ENCODE measurements at regions of chr12 and their contacts with region 1.

Region 1: DNA sequence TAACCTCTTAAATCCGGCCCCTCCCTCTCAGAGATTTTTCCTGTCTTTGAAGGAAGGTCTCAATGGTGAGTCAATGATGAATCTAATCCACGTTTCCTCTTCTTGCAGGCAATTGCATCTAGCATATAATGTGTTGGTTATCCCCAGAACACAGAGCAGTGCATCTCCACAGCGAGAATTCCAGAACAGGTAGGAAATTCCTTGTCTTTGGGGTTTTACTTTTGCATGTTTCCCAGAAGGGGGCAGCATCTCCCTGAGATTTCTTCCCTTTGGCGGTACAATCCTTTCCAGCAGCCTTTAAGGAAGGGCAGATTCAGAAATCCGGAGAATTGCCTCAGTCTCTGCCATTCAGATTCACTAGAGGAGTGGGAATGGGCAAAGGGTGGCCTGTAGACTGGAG is 128.0 kb downstream of the KCNA5 start:
- DNase-seq: no peak
- ATAC-seq: peak; percentile 43
- H3K4me3 ChIP-seq: no peak overlapping the region
- H3K27ac ChIP-seq: peak overlapping the region in 1 of 2 donors; percentile 25
- H3K4me1 ChIP-seq: peaks cover 0 to 6% of the 10 kb centered on the region in 2 donors
- H3K27me3 ChIP-seq: no peaks in the 10 kb centered on the region

Region 2: GRCh38 chr12:5022465-5023061 is 149.1 kb before region 1 on chr12:
- intact Hi-C with region 1: loop called (anchors 10 kb)
- DNase-seq: peak in 1 of 2 donors; percentile 81
- ATAC-seq: peak; percentile 63
- H3K4me3 ChIP-seq: no peak overlapping the region
- H3K27ac ChIP-seq: no peak overlapping the region
- H3K4me1 ChIP-seq: peaks cover 0 to 2% of the 10 kb centered on the region in 2 donors
- H3K27me3 ChIP-seq: no peaks in the 10 kb centered on the region

Region 3: GRCh38 chr12:5096241-5096935 is 75.3 kb before region 1 on chr12:
- intact Hi-C with region 1: loop called in 1 of 2 experiments (anchors 5 kb)
- DNase-seq: no peak
- ATAC-seq: no peak
- H3K4me3 ChIP-seq: no peak overlapping the region
- H3K27ac ChIP-seq: no peak overlapping the region
- H3K4me1 ChIP-seq: no peaks in the 10 kb centered on the region
- H3K27me3 ChIP-seq: no peaks in the 10 kb centered on the region

Region 4: GRCh38 chr12:5428332-5429221 is 256.9 kb after region 1 on chr12:
- intact Hi-C with region 1: loop called in 1 of 2 experiments (anchors 5 kb)
- DNase-seq: no peak
- ATAC-seq: no peak
- H3K4me3 ChIP-seq: no peak overlapping the region
- H3K27ac ChIP-seq: no peak overlapping the region
- H3K4me1 ChIP-seq: no peaks in the 10 kb centered on the region
- H3K27me3 ChIP-seq: no peaks in the 10 kb centered on the region

Region 5: DNA sequence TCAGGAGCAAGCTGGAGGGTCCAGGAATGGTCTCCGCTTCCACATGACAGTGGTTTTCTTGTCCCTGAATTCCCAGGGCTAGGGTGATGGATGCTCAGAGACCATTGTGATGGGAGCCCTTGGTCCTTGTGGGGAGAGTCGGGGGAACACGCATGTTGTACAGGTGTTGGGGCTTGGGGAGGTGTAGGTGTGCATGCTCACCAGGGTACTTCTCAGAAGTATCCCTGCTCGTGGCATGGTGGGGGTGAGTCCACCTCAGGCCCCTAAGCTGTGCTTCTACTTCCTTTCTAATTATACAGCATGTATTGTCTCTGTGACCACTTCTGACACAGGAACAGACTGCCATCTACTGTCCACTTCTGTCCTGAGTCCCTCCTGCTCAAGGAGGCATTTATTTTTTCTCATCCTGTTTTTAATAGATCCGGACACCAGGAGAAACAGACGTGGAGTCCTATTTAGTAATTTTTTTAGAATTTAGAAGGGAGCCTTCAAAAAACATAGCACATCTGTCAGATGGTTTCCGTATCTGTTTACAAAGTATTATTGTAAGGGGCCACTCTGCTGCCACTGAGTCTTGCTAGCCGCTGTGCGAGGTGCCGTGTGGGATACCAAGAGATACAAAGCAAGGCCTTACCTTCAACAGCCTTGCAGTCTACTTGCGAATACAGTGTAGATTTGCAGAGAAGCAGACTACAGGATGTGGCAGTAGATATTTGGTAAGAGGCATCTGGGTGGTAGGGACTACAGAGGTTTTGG is 270.7 kb after region 1 on chr12:
- intact Hi-C with region 1: loop called in 1 of 2 experiments (anchors 5 kb)
- DNase-seq: no peak
- ATAC-seq: peak; percentile 71
- H3K4me3 ChIP-seq: no peak overlapping the region
- H3K27ac ChIP-seq: no peak overlapping the region
- H3K4me1 ChIP-seq: peaks cover under 1 to 8% of the 10 kb centered on the region in 2 donors
- H3K27me3 ChIP-seq: no peaks in the 10 kb centered on the region

Region 6: DNA sequence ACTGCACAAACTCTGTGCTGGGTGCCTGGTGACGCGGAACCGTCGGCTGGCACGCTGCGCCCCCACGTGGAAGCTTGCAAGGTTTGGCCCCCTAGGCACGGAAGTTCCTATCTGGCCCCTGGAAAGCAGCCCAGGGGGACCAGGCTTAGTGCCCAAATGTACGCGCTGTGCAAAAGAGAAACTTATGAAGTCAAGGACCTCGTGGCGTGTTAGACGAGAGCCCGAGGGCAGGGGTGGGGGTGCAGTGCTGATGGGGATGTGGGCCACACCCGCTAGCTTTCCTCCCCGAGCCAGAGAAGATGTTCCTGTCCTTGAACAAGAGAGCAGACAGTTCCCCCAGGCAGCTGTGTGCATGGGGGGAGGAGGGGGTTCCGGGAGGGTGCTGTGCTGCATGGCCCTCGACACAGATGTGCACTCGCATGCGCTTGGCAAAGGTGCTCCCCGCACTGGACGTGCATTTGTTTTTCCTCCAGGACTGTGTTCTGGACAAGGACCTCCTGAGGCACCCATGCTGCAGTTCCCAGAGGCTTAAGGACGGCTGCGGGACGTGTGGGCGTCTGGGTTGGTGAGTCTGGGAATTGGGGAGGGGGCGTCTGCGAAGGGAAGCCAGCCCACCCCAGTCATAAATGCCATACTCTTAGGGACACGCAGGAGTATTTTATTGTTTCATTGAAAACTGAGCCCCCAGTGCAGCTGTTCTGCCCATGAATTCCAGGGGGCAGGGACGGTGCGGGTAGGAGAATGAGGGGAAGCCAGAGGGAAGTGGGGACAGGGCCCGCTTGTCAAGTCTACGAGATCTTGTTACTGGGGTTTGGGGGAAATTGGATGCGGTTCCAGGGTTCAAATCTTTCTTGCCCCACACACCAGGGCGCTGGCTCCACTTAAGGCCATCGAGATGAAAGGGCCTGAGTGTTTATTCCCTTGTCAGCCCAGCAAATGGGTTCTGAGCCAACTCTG is 340.2 kb after region 1 on chr12:
- intact Hi-C with region 1: loop called in 1 of 2 experiments (anchors 10 kb)
- DNase-seq: peak; percentile 74 to 91
- ATAC-seq: peak; percentile 69
- H3K4me3 ChIP-seq: no peak overlapping the region
- H3K27ac ChIP-seq: no peak overlapping the region
- H3K4me1 ChIP-seq: no peaks in the 10 kb centered on the region
- H3K27me3 ChIP-seq: no peaks in the 10 kb centered on the region

Region 7: GRCh38 chr12:5648692-5649359 is 477.1 kb after region 1 on chr12:
- intact Hi-C with region 1: loop called in 1 of 2 experiments (anchors 10 kb)
- DNase-seq: no peak
- ATAC-seq: peak; percentile 60
- H3K4me3 ChIP-seq: no peak overlapping the region
- H3K27ac ChIP-seq: no peak overlapping the region
- H3K4me1 ChIP-seq: no peaks in the 10 kb centered on the region
- H3K27me3 ChIP-seq: no peaks in the 10 kb centered on the region